ENCODE measurements at regions of chr15 and their contacts with region 1.

Region 1: DNA sequence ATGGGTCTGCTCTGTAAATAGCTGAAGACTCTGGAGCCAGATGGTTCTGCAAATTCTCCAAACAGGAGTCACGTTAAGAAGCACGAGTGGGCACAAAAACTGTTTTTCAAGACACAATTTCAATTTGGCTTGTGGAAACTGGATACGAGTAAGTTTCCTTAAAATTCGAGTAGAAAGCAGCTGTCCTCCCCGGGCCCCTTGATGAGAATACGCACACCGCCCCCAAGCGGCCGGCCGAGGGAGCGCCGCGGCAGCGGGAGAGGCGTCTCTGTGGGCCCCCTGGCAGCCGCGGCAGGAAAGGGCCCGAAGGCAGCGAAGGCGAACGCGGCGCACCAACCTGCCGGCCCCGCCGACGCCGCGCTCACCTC is 778 bp upstream of the THBS1 start:
- DNase-seq: peak; percentile 86 to 94
- ATAC-seq: peak; percentile 93 to 96 (median 94)
- H3K4me3 ChIP-seq: peak overlapping the region; percentile 47
- H3K4me3 Mint-ChIP-seq: peak overlapping the region; percentile 78
- H3K27ac ChIP-seq: no peak overlapping the region
- H3K27ac Mint-ChIP-seq: peak overlapping the region; percentile 37 to 76
- H3K4me1 ChIP-seq: peaks cover 30% of the 10 kb centered on the region
- H3K4me1 Mint-ChIP-seq: peaks cover 29 to 48% of the 10 kb centered on the region in 2 donors
- H3K27me3 ChIP-seq: peaks cover 5% of the 10 kb centered on the region
- H3K27me3 Mint-ChIP-seq: peaks cover 8 to 23% of the 10 kb centered on the region in 2 donors
- CTCF ChIP-seq: peak; percentile 98

Region 2: DNA sequence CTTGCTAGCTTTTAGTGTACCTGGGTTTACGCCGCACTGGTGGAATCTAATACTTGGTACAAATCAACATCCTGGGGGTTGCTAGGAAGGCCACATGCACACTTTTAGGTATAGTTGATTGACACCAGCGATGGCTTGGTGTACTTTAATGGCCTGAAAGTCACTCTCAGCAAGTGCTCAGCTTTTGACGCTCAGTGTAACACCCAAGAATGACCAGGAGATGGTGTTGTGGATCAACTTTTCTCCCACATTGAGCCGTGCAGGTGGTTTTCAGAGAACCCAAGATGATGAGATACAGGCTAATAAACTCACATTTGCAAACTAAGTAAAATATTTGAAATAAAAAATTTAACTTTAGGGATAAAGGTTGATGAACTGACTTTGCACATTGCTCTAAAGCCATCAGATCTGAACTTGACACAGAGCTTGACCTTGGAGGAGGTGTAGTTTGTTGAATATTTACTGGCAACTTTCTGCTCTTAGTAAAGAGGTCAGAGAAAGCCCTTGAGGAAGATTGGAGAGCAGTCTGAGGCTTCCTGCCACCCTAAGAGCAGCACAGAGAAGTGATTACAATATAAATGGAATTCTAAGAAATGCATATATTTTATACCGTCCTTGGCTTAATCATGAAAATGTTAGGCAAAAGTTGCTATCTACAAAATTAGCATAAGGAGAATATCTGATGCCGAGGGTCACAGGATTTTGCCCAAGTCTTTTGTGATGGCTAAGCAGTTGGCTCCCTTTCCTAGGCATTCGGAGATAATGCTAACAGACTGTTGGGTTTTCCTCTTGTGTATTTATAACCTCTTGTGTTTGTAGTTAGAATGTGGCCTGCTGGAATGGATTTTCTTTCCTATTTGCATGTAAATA is 872.1 kb before region 1 on chr15:
- intact Hi-C with region 1: loop called (anchors 1 kb)
- DNase-seq: peak in 1 of 2 donors; percentile 77
- ATAC-seq: peak; percentile 66 to 90 (median 87)
- H3K4me3 ChIP-seq: no peak overlapping the region
- H3K4me3 Mint-ChIP-seq: no peak overlapping the region
- H3K27ac ChIP-seq: no peak overlapping the region
- H3K27ac Mint-ChIP-seq: no peak overlapping the region
- H3K4me1 ChIP-seq: no peaks in the 10 kb centered on the region
- H3K4me1 Mint-ChIP-seq: no peaks in the 10 kb centered on the region
- H3K27me3 ChIP-seq: no peaks in the 10 kb centered on the region
- H3K27me3 Mint-ChIP-seq: peaks cover 10 to 11% of the 10 kb centered on the region in 2 donors
- CTCF ChIP-seq: peak; percentile 73

Region 3: DNA sequence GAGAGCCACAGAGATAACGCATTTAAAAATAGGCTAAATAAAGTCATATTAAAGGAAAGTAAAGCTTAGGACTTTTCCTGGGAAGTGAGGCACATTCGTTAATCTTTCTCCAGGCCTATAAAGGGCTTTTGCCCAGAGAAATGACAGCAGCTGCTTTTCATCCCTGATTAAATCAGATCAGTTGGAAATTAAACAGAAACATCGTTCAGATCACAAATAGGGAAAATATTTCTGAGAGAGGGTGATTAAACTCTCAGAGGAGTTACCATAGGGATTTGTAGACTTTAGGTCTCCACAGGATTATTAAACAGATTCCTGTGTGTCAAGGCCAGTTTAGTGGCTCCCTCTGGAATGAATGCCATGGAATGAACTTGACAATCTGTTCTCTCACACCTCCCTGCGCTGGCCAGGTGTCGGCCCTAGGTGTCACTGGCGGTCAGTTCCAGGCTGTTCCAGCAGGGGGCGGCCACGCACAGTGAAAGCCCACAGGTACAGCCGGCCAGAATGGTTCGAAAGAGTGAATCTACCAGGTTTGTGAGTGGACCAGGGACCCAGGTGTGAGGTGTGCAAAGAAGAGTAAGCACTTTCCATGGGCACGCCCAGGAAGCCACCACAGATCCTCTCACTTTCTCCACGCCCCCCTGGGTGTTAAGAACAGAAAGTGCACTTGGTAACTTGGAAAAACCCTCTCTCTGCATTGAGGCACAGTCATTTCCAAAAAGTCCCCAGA is 762.5 kb before region 1 on chr15:
- intact Hi-C with region 1: loop called (anchors 1 kb)
- DNase-seq: peak; percentile 77 to 84
- ATAC-seq: peak; percentile 88 to 100 (median 97)
- H3K4me3 ChIP-seq: no peak overlapping the region
- H3K4me3 Mint-ChIP-seq: no peak overlapping the region
- H3K27ac ChIP-seq: no peak overlapping the region
- H3K27ac Mint-ChIP-seq: no peak overlapping the region
- H3K4me1 ChIP-seq: peaks cover 3% of the 10 kb centered on the region
- H3K4me1 Mint-ChIP-seq: no peaks in the 10 kb centered on the region
- H3K27me3 ChIP-seq: no peaks in the 10 kb centered on the region
- H3K27me3 Mint-ChIP-seq: peaks cover 0 to 13% of the 10 kb centered on the region in 2 donors
- CTCF ChIP-seq: peak; percentile 99

Region 4: GRCh38 chr15:39125904-39126303 is 454.2 kb before region 1 on chr15:
- intact Hi-C with region 1: loop called (anchors 1 kb)
- DNase-seq: peak in 1 of 2 donors; percentile 62
- ATAC-seq: peak in 1 of 3 donors; percentile 41
- H3K4me3 ChIP-seq: no peak overlapping the region
- H3K4me3 Mint-ChIP-seq: no peak overlapping the region
- H3K27ac ChIP-seq: no peak overlapping the region
- H3K27ac Mint-ChIP-seq: no peak overlapping the region
- H3K4me1 ChIP-seq: no peaks in the 10 kb centered on the region
- H3K4me1 Mint-ChIP-seq: no peaks in the 10 kb centered on the region
- H3K27me3 ChIP-seq: no peaks in the 10 kb centered on the region
- H3K27me3 Mint-ChIP-seq: peaks cover 9 to 24% of the 10 kb centered on the region in 2 donors
- CTCF ChIP-seq: peak; percentile 62